Stomach (tissue), 19 donors: ENCODE measurements at regions of chr6 and their contacts with region 1.

Region 1: GRCh38 chr6:53651764-53652401 is 13.7 kb downstream of the KLHL31 start:
- DNase-seq: peak; percentile 85 to 95
- H3K4me3 ChIP-seq: peak overlapping the region; percentile 52 to 73 (median 64)
- H3K27ac ChIP-seq: peak overlapping the region; percentile 80 to 89 (median 82)
- H3K4me1 ChIP-seq: peaks cover 6 to 33% (median 15%) of the 10 kb centered on the region in 4 donors
- H3K27me3 ChIP-seq: no peaks in the 10 kb centered on the region
- CTCF ChIP-seq: peak in 5 of 7 experiments; percentile 11 to 54 (median 23)
- EP300 ChIP-seq: no peak
- POLR2A ChIP-seq: peak in 1 of 4 donors; percentile 41

Region 2: DNA sequence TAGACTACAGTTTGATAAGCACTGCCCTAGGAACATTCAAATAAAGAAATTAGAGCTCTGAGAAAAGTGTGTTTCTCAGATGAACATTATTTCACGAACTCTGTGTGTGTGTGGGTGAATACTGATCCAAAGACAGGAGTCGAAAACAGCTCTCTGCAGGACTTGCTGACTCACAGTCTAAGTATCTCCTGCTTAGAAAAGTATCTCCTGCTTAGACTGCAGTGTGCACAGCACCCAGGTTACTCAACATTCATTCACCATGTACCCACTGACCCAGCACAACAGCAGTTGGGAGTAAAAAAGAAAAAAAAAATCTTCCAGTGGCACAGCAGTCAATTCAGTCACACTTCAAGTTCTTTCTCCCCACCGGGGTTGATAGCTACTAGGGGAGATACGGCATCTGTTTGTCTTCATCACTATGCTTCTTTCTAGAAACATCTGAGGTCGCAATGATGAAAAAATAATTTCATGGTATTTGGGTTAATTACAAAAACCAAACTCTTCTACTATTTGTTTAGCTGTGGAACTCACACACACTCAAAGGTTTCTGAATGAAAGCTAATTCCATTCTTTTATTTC is 155.0 kb before region 1 on chr6:
- intact Hi-C with region 1: loop called (anchors 5 kb)
- DNase-seq: no peak
- H3K4me3 ChIP-seq: no peak overlapping the region
- H3K27ac ChIP-seq: peak overlapping the region in 1 of 5 donors; percentile 29
- H3K4me1 ChIP-seq: peaks cover 0 to 47% (median 21%) of the 10 kb centered on the region in 4 donors
- H3K27me3 ChIP-seq: no peaks in the 10 kb centered on the region
- CTCF ChIP-seq: no peak
- EP300 ChIP-seq: no peak
- POLR2A ChIP-seq: no peak

Region 3: DNA sequence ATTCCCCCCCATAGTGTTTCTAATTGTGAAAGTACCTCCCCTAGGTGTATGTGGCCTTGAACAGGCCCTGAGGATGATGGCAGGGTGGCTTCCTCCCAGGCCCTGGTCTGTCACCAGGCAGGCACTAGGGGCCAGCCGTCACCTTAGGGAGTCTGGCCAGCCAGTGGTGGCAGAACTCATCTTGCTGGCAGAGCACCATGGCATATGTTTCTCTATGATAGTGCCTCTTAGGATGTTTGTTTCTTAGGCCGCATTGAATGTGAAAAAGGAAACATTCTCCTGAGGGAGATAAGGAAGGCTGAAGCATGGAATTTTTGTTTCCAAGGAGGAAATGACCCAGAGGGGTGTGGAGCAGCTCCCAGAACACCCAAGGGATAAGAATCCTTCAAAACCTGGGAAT is 58.9 kb after region 1 on chr6:
- intact Hi-C with region 1: no loop called
- DNase-seq: no peak
- H3K4me3 ChIP-seq: no peak overlapping the region
- H3K27ac ChIP-seq: no peak overlapping the region
- H3K4me1 ChIP-seq: no peaks in the 10 kb centered on the region
- H3K27me3 ChIP-seq: no peaks in the 10 kb centered on the region
- CTCF ChIP-seq: no peak
- EP300 ChIP-seq: no peak
- POLR2A ChIP-seq: no peak

Region 4: DNA sequence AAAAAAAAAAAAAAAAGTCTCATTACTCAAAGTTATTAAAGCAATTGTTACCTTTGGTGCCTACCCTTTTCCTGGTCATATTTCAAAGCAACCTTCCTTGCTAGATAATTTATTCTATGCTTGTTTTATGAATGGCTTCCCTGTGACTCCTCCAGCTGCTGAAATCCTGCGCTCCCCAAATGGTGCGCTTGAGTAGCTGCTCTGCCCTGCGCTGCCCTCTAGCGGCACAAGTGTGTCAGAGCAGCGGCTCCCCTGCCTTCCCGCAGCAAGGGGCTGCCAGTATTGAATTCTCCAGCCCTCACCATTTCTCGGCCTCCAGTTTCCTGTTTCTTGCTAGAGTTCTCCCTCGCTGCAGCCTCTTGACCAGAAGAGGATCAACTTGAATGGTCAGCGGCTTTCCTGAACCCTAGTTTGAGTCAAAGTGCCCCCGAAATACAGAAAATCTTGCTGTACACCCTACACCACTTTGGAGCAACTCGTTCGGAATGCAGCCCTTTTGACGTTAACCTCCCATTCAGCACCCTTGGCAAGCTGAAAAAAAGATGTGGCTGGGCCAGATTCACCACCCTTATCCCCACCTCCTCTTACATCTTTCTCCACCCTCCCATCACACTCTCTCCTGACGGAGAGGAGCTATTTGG is 74.0 kb after region 1 on chr6:
- intact Hi-C with region 1: loop called (anchors 10 kb)
- DNase-seq: peak; percentile 84 to 92
- H3K4me3 ChIP-seq: no peak overlapping the region
- H3K27ac ChIP-seq: no peak overlapping the region
- H3K4me1 ChIP-seq: peaks cover 0 to 43% (median 14%) of the 10 kb centered on the region in 4 donors
- H3K27me3 ChIP-seq: no peaks in the 10 kb centered on the region
- CTCF ChIP-seq: peak in 5 of 7 experiments; percentile 85 to 96 (median 94)
- EP300 ChIP-seq: no peak
- POLR2A ChIP-seq: no peak